CD8-positive, alpha-beta T cell (primary cell): ENCODE measurements at regions of chr9 and their contacts with region 1.

Region 1: GRCh38 chr9:91734371-91734981 is 215.6 kb downstream of the ROR2 start:
- DNase-seq: peak; percentile 29 to 74 (median 60)
- ATAC-seq: no peak
- H3K4me3 ChIP-seq: no peak overlapping the region
- H3K4me3 Mint-ChIP-seq: no peak overlapping the region
- H3K27ac ChIP-seq: no peak overlapping the region
- H3K27ac Mint-ChIP-seq: no peak overlapping the region
- H3K4me1 ChIP-seq: no peaks in the 10 kb centered on the region
- H3K4me1 Mint-ChIP-seq: no peaks in the 10 kb centered on the region
- H3K27me3 ChIP-seq: no peaks in the 10 kb centered on the region
- H3K27me3 Mint-ChIP-seq: peaks cover 14% of the 10 kb centered on the region
- CTCF ChIP-seq: peak; percentile 98

Region 2: GRCh38 chr9:91718071-91718470 is 16.4 kb before region 1 on chr9:
- CTCF ChIA-PET with region 1: interaction called, 12 read pairs
- POLR2A ChIA-PET with region 1: no interaction called
- intact Hi-C with region 1: no loop called
- DNase-seq: no peak
- ATAC-seq: no peak
- H3K4me3 ChIP-seq: no peak overlapping the region
- H3K4me3 Mint-ChIP-seq: no peak overlapping the region
- H3K27ac ChIP-seq: no peak overlapping the region
- H3K27ac Mint-ChIP-seq: no peak overlapping the region
- H3K4me1 ChIP-seq: no peaks in the 10 kb centered on the region
- H3K4me1 Mint-ChIP-seq: peaks cover 3% of the 10 kb centered on the region
- H3K27me3 ChIP-seq: peaks cover 0 to 2% of the 10 kb centered on the region in 2 experiments
- H3K27me3 Mint-ChIP-seq: peaks cover 49% of the 10 kb centered on the region
- CTCF ChIP-seq: no peak

Region 3: GRCh38 chr9:91775011-91775707 is 40.7 kb after region 1 on chr9:
- CTCF ChIA-PET with region 1: no interaction called
- POLR2A ChIA-PET with region 1: no interaction called
- intact Hi-C with region 1: no loop called
- DNase-seq: peak; percentile 39 to 79 (median 61)
- ATAC-seq: peak; percentile 73
- H3K4me3 ChIP-seq: no peak overlapping the region
- H3K4me3 Mint-ChIP-seq: no peak overlapping the region
- H3K27ac ChIP-seq: no peak overlapping the region
- H3K27ac Mint-ChIP-seq: no peak overlapping the region
- H3K4me1 ChIP-seq: no peaks in the 10 kb centered on the region
- H3K4me1 Mint-ChIP-seq: no peaks in the 10 kb centered on the region
- H3K27me3 ChIP-seq: peaks cover 2 to 5% of the 10 kb centered on the region in 2 experiments
- H3K27me3 Mint-ChIP-seq: peaks cover 30% of the 10 kb centered on the region
- CTCF ChIP-seq: peak; percentile 74

Region 4: GRCh38 chr9:91795598-91796241 is 61.2 kb after region 1 on chr9:
- CTCF ChIA-PET with region 1: no interaction called
- POLR2A ChIA-PET with region 1: no interaction called
- intact Hi-C with region 1: no loop called
- DNase-seq: no peak
- ATAC-seq: no peak
- H3K4me3 ChIP-seq: no peak overlapping the region
- H3K4me3 Mint-ChIP-seq: no peak overlapping the region
- H3K27ac ChIP-seq: no peak overlapping the region
- H3K27ac Mint-ChIP-seq: no peak overlapping the region
- H3K4me1 ChIP-seq: peaks cover 6% of the 10 kb centered on the region
- H3K4me1 Mint-ChIP-seq: peaks cover 17% of the 10 kb centered on the region
- H3K27me3 ChIP-seq: no peaks in the 10 kb centered on the region
- H3K27me3 Mint-ChIP-seq: peaks cover 4% of the 10 kb centered on the region
- CTCF ChIP-seq: no peak